Mucosa of descending colon (tissue), 3 donors: ENCODE measurements at regions of chr10 and their contacts with region 1.

Region 1: DNA sequence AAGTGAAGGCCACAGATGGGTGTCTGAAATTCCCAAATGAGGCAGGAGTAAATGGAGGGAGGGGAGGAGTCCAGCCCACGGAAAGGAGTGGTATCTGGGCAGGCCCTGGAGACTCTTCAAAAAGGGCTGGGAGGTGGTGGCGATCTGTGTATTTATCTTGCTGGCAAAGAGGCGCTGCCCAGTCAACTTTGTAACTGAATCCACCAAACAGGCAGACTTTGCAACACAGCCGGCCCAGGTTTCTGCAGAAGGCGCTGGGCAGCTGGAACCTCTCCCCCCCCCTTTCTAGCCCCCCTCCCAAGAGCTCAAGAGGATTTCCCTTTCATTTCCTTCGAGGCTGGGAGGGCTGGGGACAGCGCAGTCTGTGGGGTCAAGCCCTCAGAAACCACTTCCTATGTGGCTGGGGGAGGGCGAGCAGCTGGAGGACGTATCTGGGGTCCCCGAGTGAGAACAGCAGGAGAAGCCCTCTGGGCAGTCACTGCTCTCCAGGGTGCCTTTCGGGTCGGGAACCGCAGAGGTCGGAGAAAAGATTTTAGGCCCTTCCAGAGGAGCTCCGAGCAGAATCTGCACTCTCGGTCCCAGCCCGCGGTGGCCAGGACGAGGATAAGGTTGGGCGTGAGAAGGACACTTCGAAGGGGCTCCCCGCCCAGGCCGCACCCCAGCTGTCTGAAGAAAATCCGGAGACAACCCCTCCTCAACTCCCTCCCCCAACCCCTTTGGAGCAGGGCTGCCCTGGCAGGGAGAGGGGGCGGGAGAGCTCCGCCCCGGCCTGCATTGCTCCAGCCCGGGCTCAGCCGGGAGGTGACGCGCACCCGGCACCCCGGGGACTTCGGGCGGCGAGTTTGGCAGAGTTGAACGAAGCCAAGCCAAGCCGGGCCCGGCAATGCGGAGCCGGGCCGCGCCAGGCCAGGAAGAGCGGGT is 965 bp downstream of the ZCCHC24 start:
- DNase-seq: peak; percentile 48 to 77 (median 74)
- ATAC-seq: peak; percentile 36
- H3K4me3 ChIP-seq: peak overlapping the region; percentile 38
- H3K4me1 ChIP-seq: peaks cover 16% of the 10 kb centered on the region
- CTCF ChIP-seq: no peak

Region 2: DNA sequence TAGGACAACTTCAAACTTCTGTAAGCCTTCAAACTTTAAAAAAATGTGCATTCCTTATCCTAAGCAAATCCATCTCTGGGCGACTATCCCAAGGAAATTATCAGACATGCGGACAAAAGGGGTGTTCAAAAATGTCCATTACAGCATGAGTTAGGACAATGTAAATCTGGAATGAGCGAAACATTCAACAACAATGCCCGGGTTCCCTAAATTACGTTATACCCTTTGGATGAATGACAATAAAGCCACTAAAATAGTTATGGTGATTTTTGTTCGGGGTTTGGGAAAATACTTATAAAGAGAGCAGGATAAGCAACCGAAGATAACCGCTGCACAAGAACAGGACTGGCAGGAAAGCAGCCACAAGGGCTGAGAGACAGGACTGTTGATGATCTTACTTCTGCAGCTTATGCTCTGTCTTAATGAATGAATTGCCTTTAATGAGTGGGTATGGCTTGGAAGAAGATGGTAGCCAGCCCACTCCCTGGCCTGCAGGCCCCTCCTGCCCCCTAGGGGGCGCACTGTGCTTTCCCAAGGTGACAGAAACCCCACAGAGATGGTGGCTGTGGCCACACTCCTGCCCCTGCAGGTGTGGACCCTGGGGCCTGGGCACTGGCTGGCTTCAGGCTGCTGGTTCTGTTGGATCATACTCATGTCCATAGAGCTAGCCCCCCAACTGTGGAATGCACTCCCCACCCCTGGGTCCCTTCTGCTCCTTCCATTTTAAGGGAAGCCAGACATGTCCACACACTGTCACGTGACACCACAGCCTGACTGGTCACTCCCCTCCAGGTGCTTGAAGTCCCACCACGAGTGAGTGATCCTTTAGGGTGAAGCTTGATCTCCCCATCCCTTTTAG is 44.1 kb before region 1 on chr10:
- intact Hi-C with region 1: loop called in 1 of 2 experiments (anchors 5 kb)
- DNase-seq: peak; percentile 46 to 65 (median 61)
- ATAC-seq: peak; percentile 27
- H3K4me3 ChIP-seq: no peak overlapping the region
- H3K4me1 ChIP-seq: peaks cover 13% of the 10 kb centered on the region
- CTCF ChIP-seq: peak; percentile 14